ENCODE measurements at regions of chr12 and their contacts with region 1.

Region 1: DNA sequence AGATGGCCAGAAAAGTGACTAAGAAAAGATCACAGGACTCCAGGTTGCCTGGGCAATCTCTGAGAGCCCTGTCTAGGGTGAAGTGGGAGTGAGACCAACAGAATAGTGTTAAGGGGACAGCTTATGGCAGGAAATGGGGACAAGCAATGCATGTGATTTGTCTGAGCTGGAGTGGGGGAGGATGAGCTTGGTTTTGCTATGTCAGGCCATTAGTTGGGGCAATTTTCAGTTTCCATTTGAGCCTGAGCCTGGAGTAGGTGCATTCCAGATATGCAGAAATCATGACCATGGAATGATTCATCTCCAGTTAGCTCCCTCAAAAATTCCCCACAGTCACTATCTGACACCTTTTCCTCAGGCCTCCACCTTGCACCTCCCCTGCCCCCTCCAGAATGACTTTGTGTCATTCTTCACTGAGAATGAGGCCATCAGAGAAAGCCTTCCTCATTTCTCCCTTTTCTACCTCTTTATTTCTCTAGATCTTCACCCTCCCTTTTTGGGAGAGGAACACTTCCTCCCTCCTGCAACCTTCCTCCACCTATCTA is 150.9 kb upstream of the PLEKHG7 start:
- DNase-seq: peak; percentile 98
- ATAC-seq: peak; percentile 75
- H3K4me3 ChIP-seq: peak overlapping the region; percentile 17; the same call in 1 of the 2 replicates
- H3K27ac ChIP-seq: peak overlapping the region; percentile 98
- H3K4me1 ChIP-seq: peaks cover 67% of the 10 kb centered on the region
- H3K27me3 ChIP-seq: no peaks in the 10 kb centered on the region
- CTCF ChIP-seq: no peak
- EP300 ChIP-seq: peak; percentile 92 to 97
- POLR2A ChIP-seq: peak; percentile 57
- RAD21 ChIP-seq: no peak

Region 2: GRCh38 chr12:92539113-92539749 is 12.7 kb before region 1 on chr12:
- CTCF ChIA-PET with region 1: interaction called, 5 read pairs
- POLR2A ChIA-PET with region 1: interaction called, 204 read pairs
- RAD21 ChIA-PET with region 1: interaction called, 269 read pairs
- SMC1A ChIA-PET with region 1: interaction called, 319 read pairs
- in situ Hi-C with region 1: no loop called
- intact Hi-C with region 1: loop called (anchors 1 kb)
- DNase-seq: peak; percentile 93
- ATAC-seq: peak; percentile 54
- H3K4me3 ChIP-seq: no peak overlapping the region
- H3K27ac ChIP-seq: peak overlapping the region; percentile 99
- H3K4me1 ChIP-seq: peaks cover 72% of the 10 kb centered on the region
- H3K27me3 ChIP-seq: no peaks in the 10 kb centered on the region
- CTCF ChIP-seq: no peak
- EP300 ChIP-seq: peak; percentile 90 to 98
- POLR2A ChIP-seq: no peak
- RAD21 ChIP-seq: 0 out of 2 replicates have a peak, but pooled peaks have one; percentile 36

Region 3: DNA sequence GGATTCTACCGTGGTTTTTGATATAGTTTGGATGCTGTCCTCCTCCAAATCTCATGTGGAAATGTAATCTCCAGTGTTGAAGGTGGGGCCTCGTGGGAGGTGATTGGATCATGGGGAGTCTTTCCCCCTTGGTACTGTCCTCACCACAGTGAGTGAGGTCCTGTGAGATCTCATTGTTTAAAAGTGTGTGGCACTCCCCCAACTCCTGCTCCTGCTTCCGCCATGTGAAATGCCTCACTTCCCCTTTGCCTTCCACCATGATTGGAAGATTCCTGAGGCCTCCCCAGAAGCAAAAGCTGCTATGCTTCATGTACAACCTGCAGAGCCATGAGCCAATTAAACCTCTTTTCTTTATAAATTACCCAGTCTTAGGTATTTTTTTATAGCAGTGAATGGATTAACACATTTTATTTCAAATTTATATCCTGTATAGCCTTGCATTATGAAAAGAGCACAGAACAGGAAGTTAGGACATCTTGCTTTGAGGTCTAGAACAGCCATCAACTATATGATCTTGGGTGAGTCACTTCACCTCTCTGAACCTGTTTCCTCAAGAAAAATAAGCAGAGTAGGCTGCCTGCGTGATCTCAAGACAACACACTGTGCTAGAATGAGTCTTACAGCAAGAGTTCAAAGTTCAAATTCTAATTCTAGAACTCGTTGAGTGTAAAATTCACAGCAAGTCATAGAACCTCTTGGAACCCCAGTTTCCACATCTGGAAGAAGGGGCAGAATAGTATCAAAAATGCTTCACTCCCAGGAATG is 538.1 kb after region 1 on chr12:
- CTCF ChIA-PET with region 1: no interaction called
- POLR2A ChIA-PET with region 1: no interaction called
- RAD21 ChIA-PET with region 1: no interaction called
- SMC1A ChIA-PET with region 1: no interaction called
- in situ Hi-C with region 1: no loop called
- intact Hi-C with region 1: no loop called
- DNase-seq: no peak
- ATAC-seq: peak; percentile 81
- H3K4me3 ChIP-seq: no peak overlapping the region
- H3K27ac ChIP-seq: no peak overlapping the region
- H3K4me1 ChIP-seq: peaks cover 4% of the 10 kb centered on the region
- H3K27me3 ChIP-seq: no peaks in the 10 kb centered on the region
- CTCF ChIP-seq: no peak
- EP300 ChIP-seq: no peak
- POLR2A ChIP-seq: no peak
- RAD21 ChIP-seq: no peak